Activated B cell treated with CpG ODN at 0.5 μM for 24 hours (primary cell): ENCODE measurements at regions of chr4 and their contacts with region 1.

Region 1: DNA sequence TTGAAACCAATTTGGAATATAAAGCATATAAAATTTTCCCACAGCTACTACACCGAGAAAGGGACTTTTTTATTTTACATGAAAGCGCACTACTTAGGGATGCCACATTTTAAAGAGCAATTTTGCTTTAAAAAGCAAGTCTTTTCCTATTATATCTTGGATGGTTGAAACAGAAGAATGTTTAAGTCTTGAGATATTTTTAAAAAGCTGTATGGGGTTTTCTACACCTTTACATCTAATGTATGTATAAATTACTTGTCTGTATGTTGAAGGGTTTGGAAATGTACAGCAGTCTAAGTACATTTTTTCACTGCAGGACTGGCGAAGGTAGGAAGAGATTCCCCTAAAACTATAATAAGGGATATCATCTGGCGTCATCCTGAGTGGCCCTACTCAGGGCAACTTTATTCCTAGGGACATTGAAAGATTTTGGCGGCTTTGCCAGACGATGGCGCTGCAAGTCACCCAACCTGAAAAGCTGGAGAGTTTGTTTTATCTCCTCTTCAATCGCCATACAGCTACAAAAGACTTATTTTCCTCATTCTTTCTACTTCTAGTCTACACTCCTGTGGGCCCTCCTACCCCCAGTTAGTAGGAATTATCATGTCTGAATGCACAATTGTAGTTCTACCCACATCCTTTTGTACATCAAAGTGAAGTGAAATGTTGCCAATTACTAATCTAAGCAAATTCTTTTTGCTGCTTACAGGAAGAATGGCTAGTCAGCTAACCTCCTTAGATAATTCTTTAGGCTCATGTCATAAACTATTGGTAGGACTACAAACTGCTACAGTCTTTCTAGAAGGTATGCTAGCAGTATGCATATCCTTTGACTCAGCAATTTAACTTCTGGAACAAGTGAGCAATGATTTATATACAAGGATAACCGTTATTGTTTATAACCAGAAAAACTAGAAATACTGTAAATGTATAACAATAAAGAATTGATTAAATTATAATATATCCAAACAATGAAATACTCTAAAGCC is 782 bp upstream of the NEK1 start:
- DNase-seq: peak; percentile 52
- ATAC-seq: peak; percentile 22
- H3K4me3 Mint-ChIP-seq: peak overlapping the region; percentile 99
- H3K27ac Mint-ChIP-seq: peak overlapping the region; percentile 99
- H3K4me1 Mint-ChIP-seq: peaks cover 27% of the 10 kb centered on the region
- H3K27me3 Mint-ChIP-seq: no peaks in the 10 kb centered on the region
- CTCF ChIP-seq: no peak

Region 2: DNA sequence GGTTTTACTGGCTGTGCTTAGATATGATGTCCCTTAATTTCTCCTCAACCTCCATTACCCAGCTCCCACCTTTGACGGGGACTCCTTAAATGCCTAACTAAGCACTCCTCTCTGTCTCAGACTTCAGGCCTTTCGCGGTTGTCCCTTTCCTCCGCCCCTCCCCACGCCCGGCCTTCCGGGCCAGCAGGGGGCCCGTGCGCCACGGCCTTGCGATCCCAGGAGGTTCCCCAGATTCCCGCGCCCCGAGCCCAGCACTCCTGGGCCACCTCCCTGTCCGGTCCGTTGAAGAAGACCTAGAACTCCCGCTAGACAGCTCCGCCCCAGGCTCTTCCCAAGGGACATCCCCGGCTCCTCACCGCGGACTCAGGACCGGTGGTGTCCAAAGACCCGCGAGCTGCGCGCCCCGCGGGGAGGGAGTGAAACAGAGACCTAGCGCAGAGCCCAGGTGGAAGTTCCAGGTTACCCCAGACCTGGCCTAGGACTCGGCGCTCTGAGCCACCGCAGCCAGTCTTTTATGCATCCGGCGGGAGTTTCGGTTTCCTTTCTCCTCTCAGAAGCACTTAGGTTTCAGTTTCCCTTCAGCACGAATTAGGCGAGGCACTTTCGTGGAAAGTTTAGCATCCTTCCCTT is 1294.8 kb before region 1 on chr4 and contains the start of gene DDX60:
- CTCF ChIA-PET with region 1: no interaction called
- POLR2A ChIA-PET with region 1: no interaction called
- intact Hi-C with region 1: loop called (anchors 1 kb)
- DNase-seq: peak; percentile 68
- ATAC-seq: peak; percentile 92
- H3K4me3 Mint-ChIP-seq: peak within 1 kb of the TSS; percentile 95
- H3K27ac Mint-ChIP-seq: peak within 1 kb of the TSS; percentile 96
- H3K4me1 Mint-ChIP-seq: peaks cover 20% of the 10 kb centered on the region
- H3K27me3 Mint-ChIP-seq: no peaks in the 10 kb centered on the region
- CTCF ChIP-seq: no peak
- total RNA-seq, gene DDX60: 17.6 and 17.9 TPM in 2 replicates

Region 3: DNA sequence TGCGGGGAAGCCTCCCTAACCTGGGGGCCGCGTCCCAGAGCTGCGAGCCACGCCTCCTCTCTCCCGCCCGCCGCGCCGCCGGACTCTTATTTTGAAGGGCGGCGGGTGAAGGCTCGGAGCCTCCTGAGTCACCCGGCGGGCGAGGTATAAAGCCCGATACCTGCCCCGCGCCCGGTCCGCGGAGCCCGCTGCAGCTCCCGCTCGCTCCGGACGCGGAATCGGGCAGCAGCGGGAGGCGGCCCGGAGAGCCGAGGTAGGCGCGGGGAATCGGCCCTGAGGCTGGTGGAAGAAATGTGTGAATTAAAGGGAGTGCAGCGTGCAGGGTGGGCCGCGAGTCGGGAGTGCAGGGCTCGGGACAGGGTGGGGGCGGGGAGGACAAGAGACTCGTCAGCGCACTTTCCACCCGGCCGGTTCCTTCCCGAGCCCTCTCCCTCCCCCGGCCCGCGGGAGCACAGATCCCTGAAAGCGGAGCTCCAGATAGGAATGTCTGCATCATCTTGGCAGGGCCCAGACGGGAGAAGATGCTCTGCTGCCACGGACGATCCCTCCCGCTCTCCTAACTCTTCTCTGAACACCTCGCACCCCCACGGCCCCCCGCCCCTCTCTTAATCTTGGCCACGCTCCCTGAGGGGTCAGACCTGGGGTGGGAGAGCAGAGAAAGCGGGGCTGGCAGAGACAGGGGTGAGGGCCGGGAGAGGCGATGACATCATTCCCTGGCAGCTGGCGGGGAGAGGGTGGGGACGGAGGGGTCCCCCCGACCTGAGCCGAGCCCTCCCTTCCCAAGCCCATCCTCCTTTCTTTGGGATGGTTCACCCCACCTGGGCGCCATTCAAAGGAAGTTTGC is 781.0 kb before region 1 on chr4:
- CTCF ChIA-PET with region 1: no interaction called
- POLR2A ChIA-PET with region 1: no interaction called
- intact Hi-C with region 1: loop called (anchors 5 kb)
- DNase-seq: peak; percentile 54
- ATAC-seq: peak; percentile 89
- H3K4me3 Mint-ChIP-seq: peak overlapping the region; percentile 75
- H3K27ac Mint-ChIP-seq: no peak overlapping the region
- H3K4me1 Mint-ChIP-seq: peaks cover 18% of the 10 kb centered on the region
- H3K27me3 Mint-ChIP-seq: peaks cover 53% of the 10 kb centered on the region
- CTCF ChIP-seq: no peak

Region 4: GRCh38 chr4:169659716-169660670 is 46.8 kb after region 1 on chr4:
- CTCF ChIA-PET with region 1: interaction called, 18 read pairs
- POLR2A ChIA-PET with region 1: interaction called, 34 read pairs
- intact Hi-C with region 1: loop called (anchors 1 kb)
- DNase-seq: peak; percentile 28
- ATAC-seq: peak; percentile 92
- H3K4me3 Mint-ChIP-seq: peak overlapping the region; percentile 83
- H3K27ac Mint-ChIP-seq: peak overlapping the region; percentile 95
- H3K4me1 Mint-ChIP-seq: peaks cover 22% of the 10 kb centered on the region
- H3K27me3 Mint-ChIP-seq: no peaks in the 10 kb centered on the region
- CTCF ChIP-seq: no peak

Region 5: DNA sequence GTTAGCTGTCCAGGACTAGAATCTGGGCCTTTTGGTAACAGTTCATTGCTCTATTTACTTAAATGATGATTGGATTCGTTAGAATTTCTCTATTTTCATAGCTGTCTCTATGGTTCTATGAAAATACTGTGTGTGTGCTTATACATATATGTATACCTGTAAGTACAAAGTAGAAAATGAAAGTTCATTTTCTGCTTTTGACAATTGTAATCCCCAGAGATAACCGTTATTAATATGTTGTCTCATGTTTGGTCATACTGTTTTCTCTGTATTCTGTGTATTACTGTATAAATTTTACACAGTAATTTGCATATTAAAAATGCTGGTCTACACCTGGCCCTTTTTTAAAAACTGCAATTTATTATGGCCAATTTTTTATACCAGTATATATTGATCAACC is 62.7 kb after region 1 on chr4:
- CTCF ChIA-PET with region 1: no interaction called
- POLR2A ChIA-PET with region 1: no interaction called
- intact Hi-C with region 1: no loop called
- DNase-seq: no peak
- ATAC-seq: no peak
- H3K4me3 Mint-ChIP-seq: no peak overlapping the region
- H3K27ac Mint-ChIP-seq: no peak overlapping the region
- H3K4me1 Mint-ChIP-seq: peaks cover 4% of the 10 kb centered on the region
- H3K27me3 Mint-ChIP-seq: no peaks in the 10 kb centered on the region
- CTCF ChIP-seq: no peak

Region 6: DNA sequence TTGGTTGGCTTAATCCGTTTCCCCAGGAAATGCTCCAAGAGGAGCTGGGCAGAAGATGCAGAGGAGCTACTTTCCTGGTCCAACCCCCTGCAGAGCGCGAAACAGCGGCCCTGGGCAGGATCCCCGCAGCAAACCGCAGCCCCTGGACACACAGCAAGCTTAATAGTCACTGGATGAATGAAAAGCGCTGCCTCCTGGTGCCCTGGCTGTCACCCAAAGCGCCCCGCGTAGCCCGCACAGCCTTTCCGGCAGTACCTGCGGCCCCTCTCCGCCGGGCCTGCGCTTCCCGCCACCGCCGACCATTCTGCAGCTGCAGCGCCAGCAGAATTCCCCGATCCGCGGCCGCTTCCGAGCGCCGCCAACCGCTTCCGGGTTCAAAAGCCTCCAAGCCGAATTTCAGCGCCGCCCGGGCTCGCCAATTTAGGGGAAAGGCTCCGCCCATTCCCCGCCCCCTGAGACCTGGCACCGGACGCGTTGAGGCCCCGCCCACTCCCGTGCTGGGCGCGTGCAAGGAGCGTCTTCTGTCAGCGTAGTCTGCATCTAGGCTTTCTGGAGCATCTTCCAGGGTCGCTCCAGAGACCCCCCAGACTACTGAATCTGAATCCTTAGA is 144.5 kb after region 1 on chr4 and contains the start of gene HPF1:
- CTCF ChIA-PET with region 1: interaction called, 3 read pairs
- POLR2A ChIA-PET with region 1: no interaction called
- intact Hi-C with region 1: loop called (anchors 2 kb)
- DNase-seq: peak; percentile 85
- ATAC-seq: peak; percentile 95
- H3K4me3 Mint-ChIP-seq: peak within 1 kb of the TSS; percentile 92
- H3K27ac Mint-ChIP-seq: peak within 1 kb of the TSS; percentile 68
- H3K4me1 Mint-ChIP-seq: peaks cover 23% of the 10 kb centered on the region
- H3K27me3 Mint-ChIP-seq: no peaks in the 10 kb centered on the region
- CTCF ChIP-seq: no peak
- total RNA-seq, gene HPF1: 17.9 and 19.5 TPM in 2 replicates

Region 7: GRCh38 chr4:169810325-169811323 is 197.5 kb after region 1 on chr4:
- CTCF ChIA-PET with region 1: interaction called, 20 read pairs
- POLR2A ChIA-PET with region 1: interaction called, 4 read pairs
- intact Hi-C with region 1: loop called (anchors 1 kb)
- DNase-seq: no peak
- ATAC-seq: no peak
- H3K4me3 Mint-ChIP-seq: no peak overlapping the region
- H3K27ac Mint-ChIP-seq: no peak overlapping the region
- H3K4me1 Mint-ChIP-seq: no peaks in the 10 kb centered on the region
- H3K27me3 Mint-ChIP-seq: peaks cover 4% of the 10 kb centered on the region
- CTCF ChIP-seq: no peak

Region 8: GRCh38 chr4:170047771-170048354 is 434.7 kb after region 1 on chr4:
- CTCF ChIA-PET with region 1: interaction called, 8 read pairs
- POLR2A ChIA-PET with region 1: interaction called, 3 read pairs
- intact Hi-C with region 1: loop called (anchors 1 kb)
- DNase-seq: no peak
- ATAC-seq: no peak
- H3K4me3 Mint-ChIP-seq: no peak overlapping the region
- H3K27ac Mint-ChIP-seq: no peak overlapping the region
- H3K4me1 Mint-ChIP-seq: no peaks in the 10 kb centered on the region
- H3K27me3 Mint-ChIP-seq: peaks cover 3% of the 10 kb centered on the region
- CTCF ChIP-seq: peak; percentile 51